Transverse colon (tissue), 4 donors: ENCODE measurements at regions of chr7 and their contacts with region 1.

Region 1: DNA sequence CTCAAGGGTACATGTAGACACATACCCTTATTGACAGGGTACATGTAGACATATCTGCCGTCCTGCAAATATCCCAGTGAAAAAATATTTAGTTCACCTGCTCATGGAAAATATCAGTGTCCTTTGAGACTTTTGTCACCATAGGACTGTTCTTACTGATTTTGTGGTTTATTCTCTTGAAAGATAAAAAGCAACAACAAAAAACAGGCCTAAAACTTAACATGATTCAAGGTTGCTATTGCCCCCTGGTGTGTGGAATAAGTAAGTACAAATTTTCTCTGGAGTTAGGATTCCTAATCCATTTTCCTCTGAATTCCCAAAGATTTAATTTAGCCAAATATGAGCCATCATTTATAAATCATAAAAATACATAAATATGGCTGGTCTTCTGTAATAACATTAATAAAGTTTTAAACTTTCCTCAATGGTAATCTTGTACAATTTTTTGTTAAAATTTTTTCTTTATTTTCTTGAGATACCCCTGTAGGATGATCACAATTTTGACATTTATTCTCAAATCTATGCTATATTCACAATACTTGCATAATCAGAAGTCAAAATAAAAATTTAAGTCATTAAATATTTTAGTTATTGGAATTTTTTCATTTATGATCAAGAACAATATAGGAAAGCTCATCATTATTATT is 741.4 kb upstream of the POT1 start:
- DNase-seq: no peak
- H3K4me3 ChIP-seq: no peak overlapping the region
- H3K27ac ChIP-seq: no peak overlapping the region
- H3K4me1 ChIP-seq: no peaks in the 10 kb centered on the region
- H3K27me3 ChIP-seq: no peaks in the 10 kb centered on the region
- CTCF ChIP-seq: peak; percentile 9 to 41 (median 25)
- EP300 ChIP-seq: no peak
- POLR2A ChIP-seq: no peak

Region 2: GRCh38 chr7:125061776-125062397 is 609.2 kb before region 1 on chr7:
- in situ Hi-C with region 1: loop called in 1 of 4 experiments (anchors 25 kb)
- intact Hi-C with region 1: no loop called
- DNase-seq: no peak
- H3K4me3 ChIP-seq: no peak overlapping the region
- H3K27ac ChIP-seq: no peak overlapping the region
- H3K4me1 ChIP-seq: no peaks in the 10 kb centered on the region
- H3K27me3 ChIP-seq: no peaks in the 10 kb centered on the region
- CTCF ChIP-seq: no peak
- EP300 ChIP-seq: no peak
- POLR2A ChIP-seq: no peak